CD8-positive, alpha-beta T cell (primary cell): ENCODE measurements at regions of chr10 and their contacts with region 1.

Region 1: DNA sequence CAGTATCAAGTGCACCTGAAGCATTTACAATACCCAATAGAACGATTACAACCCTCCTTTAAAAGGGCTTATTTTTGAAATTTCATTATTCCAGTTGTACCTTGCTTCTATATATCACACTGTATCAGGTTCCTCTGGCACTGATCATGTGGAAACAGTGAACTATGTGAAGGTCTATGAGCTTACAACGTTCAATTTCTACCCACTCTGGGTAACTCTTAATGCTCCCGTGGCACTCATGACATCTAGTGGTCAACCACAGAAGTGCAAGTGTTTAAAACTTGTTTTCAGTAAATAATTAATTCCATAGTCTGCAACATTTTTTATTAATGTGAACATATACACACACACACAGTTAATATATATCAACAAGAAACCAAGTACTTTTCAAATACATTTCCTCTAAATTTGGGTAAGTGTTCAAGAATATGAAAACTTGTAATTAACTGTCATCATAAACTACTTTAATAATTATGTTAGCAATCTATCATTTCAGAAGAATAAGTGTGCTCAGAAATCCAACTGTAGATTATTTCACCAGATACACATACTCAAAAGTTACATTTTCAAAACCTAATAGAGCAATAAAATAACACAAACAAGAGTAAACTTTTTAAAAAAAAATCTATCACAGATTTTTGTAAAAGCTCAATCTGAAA is 61.0 kb downstream of the MPP7 start:
- DNase-seq: peak in 7 of 9 experiments; percentile 12 to 69 (median 23)
- ATAC-seq: peak; percentile 84
- H3K4me3 ChIP-seq: no peak overlapping the region
- H3K4me3 Mint-ChIP-seq: no peak overlapping the region
- H3K27ac ChIP-seq: no peak overlapping the region
- H3K27ac Mint-ChIP-seq: no peak overlapping the region
- H3K4me1 ChIP-seq: peaks cover 15% of the 10 kb centered on the region
- H3K4me1 Mint-ChIP-seq: peaks cover 38% of the 10 kb centered on the region
- H3K27me3 ChIP-seq: no peaks in the 10 kb centered on the region
- H3K27me3 Mint-ChIP-seq: no peaks in the 10 kb centered on the region
- CTCF ChIP-seq: peak; percentile 91

Region 2: DNA sequence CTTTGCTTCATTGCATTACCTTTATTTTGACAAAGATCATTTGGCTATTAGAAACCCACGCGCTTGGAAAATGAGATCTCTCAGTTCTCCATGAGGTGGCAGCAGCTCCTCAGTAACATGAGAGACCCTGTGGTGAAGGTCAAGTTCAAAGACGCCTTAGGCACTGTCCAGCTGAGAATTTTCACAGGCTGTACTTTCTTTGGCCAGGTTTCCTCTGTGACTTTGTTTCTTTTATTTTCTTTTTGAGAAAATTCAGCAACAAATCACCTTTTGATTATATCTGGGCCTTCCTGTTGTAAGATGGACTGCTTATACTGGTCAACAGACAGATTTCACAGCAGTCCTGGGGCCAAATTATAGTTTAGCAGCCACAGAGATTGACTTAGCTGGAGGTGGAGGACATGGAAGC is 683.3 kb before region 1 on chr10:
- CTCF ChIA-PET with region 1: interaction called, 3 read pairs
- POLR2A ChIA-PET with region 1: no interaction called
- intact Hi-C with region 1: loop called in 1 of 2 experiments (anchors 5 kb)
- DNase-seq: peak in 6 of 9 experiments; percentile 17 to 63 (median 35)
- ATAC-seq: no peak
- H3K4me3 ChIP-seq: no peak overlapping the region
- H3K4me3 Mint-ChIP-seq: no peak overlapping the region
- H3K27ac ChIP-seq: no peak overlapping the region
- H3K27ac Mint-ChIP-seq: no peak overlapping the region
- H3K4me1 ChIP-seq: no peaks in the 10 kb centered on the region
- H3K4me1 Mint-ChIP-seq: peaks cover 6% of the 10 kb centered on the region
- H3K27me3 ChIP-seq: no peaks in the 10 kb centered on the region
- H3K27me3 Mint-ChIP-seq: no peaks in the 10 kb centered on the region
- CTCF ChIP-seq: peak; percentile 61

Region 3: DNA sequence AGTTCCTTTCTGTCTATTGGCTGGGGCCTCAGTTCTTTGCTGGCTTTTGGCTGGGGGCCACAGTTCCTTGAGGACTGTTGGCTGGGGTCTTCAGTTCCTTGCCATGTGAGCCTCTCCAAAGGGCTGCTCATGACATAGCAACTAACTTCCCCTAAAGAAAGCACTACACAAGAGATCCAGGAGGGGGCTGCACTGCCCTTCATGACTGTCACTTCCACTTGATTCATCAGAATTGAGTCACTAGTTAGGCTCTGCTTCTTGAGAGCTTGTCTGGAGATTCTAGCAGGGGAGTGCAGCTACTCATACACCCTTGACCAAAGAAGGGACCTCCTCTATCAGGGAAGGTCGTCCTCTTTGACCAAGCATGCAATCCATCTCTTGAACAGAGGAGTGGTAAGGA is 458.2 kb before region 1 on chr10:
- CTCF ChIA-PET with region 1: interaction called, 5 read pairs
- POLR2A ChIA-PET with region 1: no interaction called
- intact Hi-C with region 1: loop called (anchors 1 to 2 kb)
- DNase-seq: peak in 6 of 9 experiments; percentile 2 to 53 (median 30)
- ATAC-seq: peak; percentile 71
- H3K4me3 ChIP-seq: no peak overlapping the region
- H3K4me3 Mint-ChIP-seq: no peak overlapping the region
- H3K27ac ChIP-seq: no peak overlapping the region
- H3K27ac Mint-ChIP-seq: no peak overlapping the region
- H3K4me1 ChIP-seq: no peaks in the 10 kb centered on the region
- H3K4me1 Mint-ChIP-seq: no peaks in the 10 kb centered on the region
- H3K27me3 ChIP-seq: no peaks in the 10 kb centered on the region
- H3K27me3 Mint-ChIP-seq: peaks cover 14% of the 10 kb centered on the region
- CTCF ChIP-seq: peak; percentile 30

Region 4: GRCh38 chr10:28179006-28179742 is 62.7 kb before region 1 on chr10:
- CTCF ChIA-PET with region 1: interaction called, 3 read pairs
- POLR2A ChIA-PET with region 1: no interaction called
- intact Hi-C with region 1: loop called in 1 of 2 experiments (anchors 5 kb)
- DNase-seq: peak in 3 of 9 experiments; percentile 32 to 77 (median 68)
- ATAC-seq: peak; percentile 54
- H3K4me3 ChIP-seq: peak overlapping the region; percentile 22 to 45
- H3K4me3 Mint-ChIP-seq: peak overlapping the region; percentile 91
- H3K27ac ChIP-seq: peak overlapping the region in 1 of 2 experiments; percentile 69
- H3K27ac Mint-ChIP-seq: peak overlapping the region; percentile 95
- H3K4me1 ChIP-seq: peaks cover 16% of the 10 kb centered on the region
- H3K4me1 Mint-ChIP-seq: peaks cover 44% of the 10 kb centered on the region
- H3K27me3 ChIP-seq: no peaks in the 10 kb centered on the region
- H3K27me3 Mint-ChIP-seq: no peaks in the 10 kb centered on the region
- CTCF ChIP-seq: peak; percentile 93

Region 5: GRCh38 chr10:28393966-28394568 is 152.2 kb after region 1 on chr10:
- CTCF ChIA-PET with region 1: interaction called, 25 read pairs
- POLR2A ChIA-PET with region 1: no interaction called
- intact Hi-C with region 1: no loop called
- DNase-seq: peak; percentile 26 to 79 (median 63)
- ATAC-seq: peak; percentile 74
- H3K4me3 ChIP-seq: no peak overlapping the region
- H3K4me3 Mint-ChIP-seq: no peak overlapping the region
- H3K27ac ChIP-seq: no peak overlapping the region
- H3K27ac Mint-ChIP-seq: no peak overlapping the region
- H3K4me1 ChIP-seq: no peaks in the 10 kb centered on the region
- H3K4me1 Mint-ChIP-seq: peaks cover 4% of the 10 kb centered on the region
- H3K27me3 ChIP-seq: no peaks in the 10 kb centered on the region
- H3K27me3 Mint-ChIP-seq: peaks cover 15% of the 10 kb centered on the region
- CTCF ChIP-seq: peak; percentile 99